ENCODE measurements at regions of chr21 and their contacts with region 1.

Region 1: GRCh38 chr21:45596704-45597318 is 46.7 kb upstream of the PCBP3 start:
- DNase-seq: peak; percentile 88
- H3K4me3 Mint-ChIP-seq: no peak overlapping the region
- H3K27ac Mint-ChIP-seq: peak overlapping the region; percentile 26
- H3K4me1 Mint-ChIP-seq: peaks cover 11% of the 10 kb centered on the region
- H3K27me3 Mint-ChIP-seq: no peaks in the 10 kb centered on the region

Region 2: DNA sequence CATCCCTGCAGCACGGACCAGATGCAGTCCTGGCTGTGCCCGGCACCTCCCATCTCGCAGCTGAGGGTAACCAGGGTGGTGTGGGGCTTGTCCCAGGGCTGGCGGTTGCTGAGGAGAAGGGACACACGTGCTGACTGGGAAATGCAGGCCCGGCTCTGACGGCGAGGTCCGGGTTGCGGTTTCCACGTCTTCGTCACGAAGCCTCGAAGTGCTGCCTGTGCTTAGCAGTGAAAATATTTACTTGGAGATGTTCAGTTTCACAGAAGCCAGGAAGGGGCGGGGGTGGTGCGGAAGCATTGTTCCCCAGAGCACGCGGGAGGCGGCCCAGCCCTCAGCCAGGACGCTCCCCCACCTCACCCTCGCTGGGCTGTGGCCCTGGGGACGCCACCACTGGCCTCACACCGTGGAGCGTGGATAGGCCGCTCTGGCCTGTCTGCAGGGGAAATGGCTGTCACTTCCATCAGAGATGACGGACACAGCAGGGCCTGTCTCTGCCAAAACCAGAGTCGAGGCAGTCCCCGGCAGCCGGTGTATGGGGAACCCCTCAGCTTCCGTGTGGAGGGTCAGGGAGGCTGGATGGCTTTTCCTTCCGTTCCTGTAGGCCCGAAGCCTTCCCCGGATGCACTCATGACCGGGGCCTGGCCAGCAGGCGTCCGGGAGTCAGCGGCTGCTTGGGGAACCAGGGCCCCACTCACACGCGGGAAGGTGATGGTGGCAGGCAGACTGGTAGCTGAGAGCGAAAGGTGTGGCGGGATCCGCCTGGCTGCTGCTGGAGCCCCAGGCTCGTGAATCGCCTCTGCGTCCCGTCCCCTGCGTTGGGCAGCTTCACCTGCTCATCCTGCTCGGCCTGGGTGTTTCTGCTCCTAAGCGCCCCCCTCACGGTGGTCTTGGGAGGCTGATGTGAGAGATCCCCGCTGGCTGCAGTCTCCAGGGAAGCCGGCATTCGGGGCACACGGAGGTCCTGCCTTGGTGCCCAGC is 294.4 kb before region 1 on chr21:
- CTCF ChIA-PET with region 1: no interaction called
- POLR2A ChIA-PET with region 1: no interaction called
- intact Hi-C with region 1: no loop called
- DNase-seq: peak; percentile 65
- H3K4me3 Mint-ChIP-seq: no peak overlapping the region
- H3K27ac Mint-ChIP-seq: no peak overlapping the region
- H3K4me1 Mint-ChIP-seq: no peaks in the 10 kb centered on the region
- H3K27me3 Mint-ChIP-seq: no peaks in the 10 kb centered on the region

Region 3: DNA sequence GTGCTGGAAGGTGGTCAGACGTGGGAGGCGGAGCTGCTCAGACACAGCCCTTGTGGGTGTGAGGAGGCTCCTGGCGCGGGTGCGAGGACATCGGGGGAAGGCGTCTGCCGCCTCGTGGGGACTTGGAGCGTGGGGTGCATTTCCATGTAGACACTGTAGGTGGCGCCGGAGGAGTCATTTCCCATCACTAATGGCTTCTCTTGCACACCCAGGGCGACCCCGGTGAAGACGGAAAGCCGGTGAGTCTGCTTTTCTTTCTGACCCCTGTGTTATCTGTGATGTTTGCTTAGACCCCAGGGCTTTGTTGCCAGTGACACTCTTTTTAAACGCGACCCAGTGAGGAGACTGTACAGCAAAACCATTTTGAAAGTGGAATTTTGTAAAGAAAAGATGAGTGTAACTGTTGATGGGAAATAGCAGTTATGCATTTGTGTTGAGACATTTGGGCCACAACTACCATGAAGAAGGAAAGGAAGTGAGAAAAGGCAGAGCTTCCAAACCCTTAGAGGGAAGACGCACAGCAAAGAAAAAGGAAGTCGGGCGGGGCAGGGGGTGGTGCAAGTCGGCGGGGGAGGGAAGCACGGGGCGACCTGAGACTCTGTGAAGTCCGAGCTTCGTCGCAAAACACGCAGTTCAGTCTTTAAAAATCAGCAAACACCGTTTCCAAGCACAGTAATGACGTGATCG is 118.6 kb before region 1 on chr21:
- CTCF ChIA-PET with region 1: interaction called, 11 read pairs
- POLR2A ChIA-PET with region 1: no interaction called
- intact Hi-C with region 1: no loop called
- DNase-seq: peak; percentile 86
- H3K4me3 Mint-ChIP-seq: peak overlapping the region; percentile 78
- H3K27ac Mint-ChIP-seq: peak overlapping the region; percentile 90
- H3K4me1 Mint-ChIP-seq: peaks cover 24% of the 10 kb centered on the region
- H3K27me3 Mint-ChIP-seq: no peaks in the 10 kb centered on the region

Region 4: GRCh38 chr21:45615145-45615711 is 18.4 kb after region 1 on chr21:
- CTCF ChIA-PET with region 1: interaction called, 10 read pairs
- POLR2A ChIA-PET with region 1: no interaction called
- intact Hi-C with region 1: loop called (anchors 2 kb)
- DNase-seq: peak; percentile 90
- H3K4me3 Mint-ChIP-seq: peak overlapping the region; percentile 71
- H3K27ac Mint-ChIP-seq: peak overlapping the region; percentile 34
- H3K4me1 Mint-ChIP-seq: peaks cover 25% of the 10 kb centered on the region
- H3K27me3 Mint-ChIP-seq: no peaks in the 10 kb centered on the region